Posterior vena cava (tissue), 2 donors: ENCODE measurements at regions of chr11 and their contacts with region 1.

Region 1: DNA sequence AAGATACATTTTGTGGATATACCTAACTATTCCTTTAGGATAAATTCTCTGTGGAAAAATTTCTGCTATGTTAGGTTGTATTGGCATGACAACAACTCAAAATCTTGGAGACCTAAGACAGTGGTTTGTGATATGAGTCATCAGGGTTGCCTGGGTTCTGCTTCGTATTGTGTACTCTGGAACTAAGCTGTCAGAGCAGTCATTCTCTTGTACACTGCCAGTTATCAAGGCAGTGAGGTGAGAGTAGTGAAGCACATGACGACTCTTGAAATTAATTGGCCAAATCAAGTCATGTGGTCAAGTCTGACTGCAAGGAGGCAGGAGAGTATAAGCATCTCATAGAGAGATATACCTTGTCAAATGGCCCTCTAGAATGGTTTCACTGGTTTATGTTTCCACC is 104.4 kb downstream of the FANCF start:
- DNase-seq: no peak

Region 2: GRCh38 chr11:22456992-22457748 is 64.1 kb before region 1 on chr11:
- intact Hi-C with region 1: loop called in 1 of 2 experiments (anchors 2 kb)
- DNase-seq: no peak

Region 3: GRCh38 chr11:22567759-22568158 is 46.5 kb after region 1 on chr11:
- intact Hi-C with region 1: no loop called
- DNase-seq: peak; percentile 62